ENCODE measurements at regions of chr5 and their contacts with region 1.

Region 1: DNA sequence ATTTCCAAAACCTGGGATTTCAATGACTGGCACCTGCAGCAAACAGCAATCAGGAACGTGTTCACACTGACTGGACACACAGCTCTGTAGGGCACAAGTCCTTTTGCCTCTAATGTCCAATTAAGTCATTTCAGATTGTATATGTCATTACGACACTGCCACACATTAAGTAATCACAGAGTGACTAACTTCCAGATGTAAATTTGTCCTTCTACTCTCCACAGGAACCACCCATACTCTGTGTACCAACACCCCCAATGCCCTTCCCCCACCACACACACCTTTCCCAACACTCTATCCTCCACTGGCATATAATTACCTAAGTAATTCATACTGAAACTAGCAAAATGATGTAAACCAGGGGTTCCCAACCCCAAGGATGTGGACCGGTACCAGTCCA is 30.5 kb downstream of the LARS1 start:
- DNase-seq: no peak
- H3K4me3 ChIP-seq: no peak overlapping the region
- H3K27ac ChIP-seq: no peak overlapping the region
- H3K4me1 ChIP-seq: no peaks in the 10 kb centered on the region
- H3K27me3 ChIP-seq: no peaks in the 10 kb centered on the region
- CTCF ChIP-seq: no peak
- EP300 ChIP-seq: no peak
- POLR2A ChIP-seq: no peak
- RAD21 ChIP-seq: no peak

Region 2: GRCh38 chr5:145723516-145723915 is 428.5 kb before region 1 on chr5:
- CTCF ChIA-PET with region 1: no interaction called
- POLR2A ChIA-PET with region 1: no interaction called
- DNase-seq: no peak
- H3K4me3 ChIP-seq: no peak overlapping the region
- H3K27ac ChIP-seq: no peak overlapping the region
- H3K4me1 ChIP-seq: no peaks in the 10 kb centered on the region
- H3K27me3 ChIP-seq: no peaks in the 10 kb centered on the region
- CTCF ChIP-seq: no peak
- EP300 ChIP-seq: no peak
- POLR2A ChIP-seq: no peak
- RAD21 ChIP-seq: no peak

Region 3: GRCh38 chr5:145960848-145961600 is 190.9 kb before region 1 on chr5:
- CTCF ChIA-PET with region 1: no interaction called
- POLR2A ChIA-PET with region 1: no interaction called
- DNase-seq: no peak
- H3K4me3 ChIP-seq: no peak overlapping the region
- H3K27ac ChIP-seq: no peak overlapping the region
- H3K4me1 ChIP-seq: no peaks in the 10 kb centered on the region
- H3K27me3 ChIP-seq: no peaks in the 10 kb centered on the region
- CTCF ChIP-seq: no peak
- EP300 ChIP-seq: no peak
- POLR2A ChIP-seq: no peak
- RAD21 ChIP-seq: no peak

Region 4: DNA sequence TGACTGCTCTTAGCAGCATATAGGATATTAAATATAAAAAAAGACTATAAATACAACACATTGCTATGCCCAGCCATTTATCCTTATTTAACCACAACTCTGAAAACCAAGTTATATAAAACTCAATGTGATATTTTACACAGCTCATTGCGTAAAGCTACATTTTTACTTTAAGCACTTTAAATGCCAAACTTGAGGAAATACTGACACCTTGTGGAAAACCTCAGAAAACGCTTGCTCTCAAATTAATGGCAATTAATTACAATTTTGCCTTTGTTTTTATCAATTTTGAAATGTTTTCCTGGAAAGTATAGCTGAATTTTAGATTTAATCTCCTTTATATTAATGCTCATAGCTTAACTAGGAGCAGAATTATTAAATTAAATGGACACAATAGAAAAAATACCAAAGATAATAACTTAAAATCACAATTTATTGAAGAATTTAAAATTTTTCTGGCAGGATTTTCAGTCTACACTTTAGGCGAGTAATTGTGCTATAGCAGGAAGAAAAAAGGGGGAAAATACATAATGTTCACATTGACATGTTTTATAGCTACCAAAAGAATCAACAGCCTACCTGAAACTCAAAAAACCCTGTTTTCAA is 21.4 kb before region 1 on chr5:
- CTCF ChIA-PET with region 1: interaction called, 11 read pairs
- POLR2A ChIA-PET with region 1: interaction called, 33 read pairs
- DNase-seq: no peak
- H3K4me3 ChIP-seq: no peak overlapping the region
- H3K27ac ChIP-seq: no peak overlapping the region
- H3K4me1 ChIP-seq: no peaks in the 10 kb centered on the region
- H3K27me3 ChIP-seq: no peaks in the 10 kb centered on the region
- CTCF ChIP-seq: peak in 2 of 3 experiments; percentile 25 to 61; a peak in 2 of 4 replicates
- EP300 ChIP-seq: no peak
- POLR2A ChIP-seq: no peak
- RAD21 ChIP-seq: peak; percentile 56 to 58

Region 5: DNA sequence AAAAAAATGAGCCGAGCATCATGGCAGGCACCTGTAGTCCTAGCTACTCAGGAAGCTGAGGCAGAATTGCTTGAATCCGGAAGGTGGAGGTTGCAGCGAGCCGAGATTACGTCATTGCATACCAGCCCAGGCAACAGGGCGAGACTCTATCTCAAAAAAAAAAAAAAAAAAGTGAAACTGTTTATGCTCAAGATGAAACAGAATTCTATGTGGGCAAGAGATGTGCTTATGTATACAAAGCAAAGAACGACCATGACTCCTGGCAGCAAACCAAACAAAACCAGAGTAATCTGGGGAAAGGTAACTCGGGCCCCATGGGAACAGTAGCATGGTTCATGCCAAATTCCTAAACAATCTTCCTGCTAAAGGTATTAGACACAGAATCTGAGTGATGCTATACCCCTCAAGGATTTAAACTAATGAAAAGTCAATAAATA is 14.0 kb before region 1 on chr5:
- CTCF ChIA-PET with region 1: interaction called, 5 read pairs
- POLR2A ChIA-PET with region 1: interaction called, 33 read pairs
- DNase-seq: no peak
- H3K4me3 ChIP-seq: no peak overlapping the region
- H3K27ac ChIP-seq: no peak overlapping the region
- H3K4me1 ChIP-seq: no peaks in the 10 kb centered on the region
- H3K27me3 ChIP-seq: no peaks in the 10 kb centered on the region
- CTCF ChIP-seq: no peak
- EP300 ChIP-seq: no peak
- POLR2A ChIP-seq: no peak
- RAD21 ChIP-seq: no peak

Region 6: DNA sequence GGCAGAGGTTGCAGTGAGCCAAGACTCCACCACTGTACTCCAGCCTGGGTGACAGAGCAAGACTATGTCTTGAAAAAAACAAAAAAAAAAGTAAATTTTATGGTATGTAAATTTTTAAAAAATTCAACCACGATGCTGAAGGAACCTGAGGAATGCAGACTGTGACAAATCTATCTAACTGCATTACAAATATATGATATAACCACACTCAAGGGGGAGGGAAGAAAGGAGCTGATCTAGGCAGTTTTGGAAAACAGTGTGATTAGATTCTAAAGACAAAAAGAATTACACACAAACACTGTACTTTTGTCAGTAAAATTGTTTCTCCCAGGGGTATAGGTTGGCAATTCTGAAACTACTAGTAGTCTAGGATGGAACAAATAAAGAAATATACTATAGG is 13.5 kb after region 1 on chr5:
- CTCF ChIA-PET with region 1: no interaction called
- POLR2A ChIA-PET with region 1: interaction called, 34 read pairs
- DNase-seq: no peak
- H3K4me3 ChIP-seq: no peak overlapping the region
- H3K27ac ChIP-seq: no peak overlapping the region
- H3K4me1 ChIP-seq: no peaks in the 10 kb centered on the region
- H3K27me3 ChIP-seq: no peaks in the 10 kb centered on the region
- CTCF ChIP-seq: no peak
- EP300 ChIP-seq: no peak
- POLR2A ChIP-seq: no peak
- RAD21 ChIP-seq: no peak

Measured in H1 (cell line).